Common myeloid progenitor, CD34-positive (primary cell): ENCODE measurements at regions of chr18 and their contacts with region 1.

Region 1: GRCh38 chr18:12264864-12265263 is 10.7 kb downstream of the CIDEA start:
- DNase-seq: no peak
- H3K4me3 ChIP-seq: no peak overlapping the region
- H3K27ac ChIP-seq: no peak overlapping the region
- H3K4me1 ChIP-seq: no peaks in the 10 kb centered on the region
- H3K27me3 ChIP-seq: peaks cover 0 to 5% (median 0%) of the 10 kb centered on the region in 5 experiments

Region 2: GRCh38 chr18:12278741-12279682 is 14.1 kb after region 1 on chr18:
- CTCF ChIA-PET with region 1: interaction called, 22 read pairs
- POLR2A ChIA-PET with region 1: no interaction called
- DNase-seq: no peak
- H3K4me3 ChIP-seq: peak overlapping the region in 2 of 7 experiments; percentile 10 to 13
- H3K27ac ChIP-seq: no peak overlapping the region
- H3K4me1 ChIP-seq: peaks cover 0 to 16% (median 4%) of the 10 kb centered on the region in 4 experiments
- H3K27me3 ChIP-seq: peaks cover 0 to 8% (median 0%) of the 10 kb centered on the region in 5 experiments

Region 3: GRCh38 chr18:13548966-13549879 is 1284.4 kb after region 1 on chr18:
- CTCF ChIA-PET with region 1: no interaction called
- POLR2A ChIA-PET with region 1: no interaction called
- DNase-seq: peak in 1 of 3 donors; percentile 44
- H3K4me3 ChIP-seq: peak overlapping the region in 2 of 7 experiments; percentile 20 to 31
- H3K27ac ChIP-seq: no peak overlapping the region
- H3K4me1 ChIP-seq: peaks cover 2 to 31% (median 24%) of the 10 kb centered on the region in 4 experiments
- H3K27me3 ChIP-seq: no peaks in the 10 kb centered on the region